ENCODE measurements at regions of chr3 and their contacts with region 1.

Region 1: DNA sequence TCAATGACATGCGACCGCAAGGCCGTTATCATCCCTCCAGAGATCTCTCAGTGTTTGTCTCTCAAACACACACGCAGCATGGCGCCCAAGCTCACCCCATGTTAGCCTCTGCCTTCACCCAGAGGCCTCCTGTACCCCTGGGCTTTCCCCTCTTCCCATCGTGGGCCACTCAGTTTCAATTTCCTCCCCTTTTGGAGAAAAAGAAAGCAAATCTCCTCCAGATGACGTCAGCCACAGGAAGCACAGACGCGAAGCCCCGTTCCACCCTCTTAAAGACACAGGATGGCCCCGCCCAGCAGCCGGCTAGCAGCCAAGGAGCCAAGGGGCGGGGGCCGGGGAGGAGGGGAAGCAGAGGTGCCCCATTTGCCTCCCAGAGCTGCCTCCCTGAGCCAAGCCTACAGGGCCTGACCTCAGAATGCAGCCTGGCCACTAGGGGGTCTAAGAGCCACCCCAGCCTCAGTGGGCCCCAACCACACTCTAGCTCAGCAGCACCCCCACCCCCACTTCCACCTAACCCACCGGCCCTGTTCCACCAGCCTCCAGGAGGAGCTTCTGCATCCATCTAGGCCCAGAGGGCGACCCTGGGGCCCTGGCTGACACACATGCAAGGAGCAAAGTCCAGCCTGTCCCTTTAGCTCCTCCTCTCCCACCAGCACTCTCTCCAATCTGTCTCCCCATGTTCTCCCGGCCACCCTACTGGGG is 26.5 kb downstream of the ATRIP start:
- DNase-seq: peak; percentile 87 to 97 (median 94)
- ATAC-seq: peak; percentile 86 to 93
- H3K4me3 Mint-ChIP-seq: peak overlapping the region; percentile 84 to 100 (median 94)
- H3K27ac Mint-ChIP-seq: peak overlapping the region; percentile 95 to 100 (median 98)
- H3K4me1 Mint-ChIP-seq: peaks cover 26 to 76% (median 61%) of the 10 kb centered on the region in 4 donors
- H3K27me3 Mint-ChIP-seq: no peaks in the 10 kb centered on the region

Region 2: GRCh38 chr3:48556793-48557626 is 83.9 kb after region 1 on chr3 and contains the start of gene PFKFB4:
- POLR2A ChIA-PET with region 1: interaction called, 10 read pairs
- DNase-seq: peak; percentile 97 to 100 (median 99)
- ATAC-seq: peak; percentile 90 to 92
- H3K4me3 Mint-ChIP-seq: peak within 1 kb of the TSS; percentile 80 to 96 (median 88)
- H3K27ac Mint-ChIP-seq: peak within 1 kb of the TSS; percentile 12 to 89 (median 74)
- H3K4me1 Mint-ChIP-seq: peaks cover 12 to 41% (median 23%) of the 10 kb centered on the region in 4 donors
- H3K27me3 Mint-ChIP-seq: no peaks in the 10 kb centered on the region
- polyA plus RNA-seq, gene PFKFB4: 1.1 to 3.3 (median 1.9) TPM

Measured in naive thymus-derived CD8-positive, alpha-beta T cell (primary cell).